ENCODE measurements at regions of chr13 and their contacts with region 1.

Region 1: DNA sequence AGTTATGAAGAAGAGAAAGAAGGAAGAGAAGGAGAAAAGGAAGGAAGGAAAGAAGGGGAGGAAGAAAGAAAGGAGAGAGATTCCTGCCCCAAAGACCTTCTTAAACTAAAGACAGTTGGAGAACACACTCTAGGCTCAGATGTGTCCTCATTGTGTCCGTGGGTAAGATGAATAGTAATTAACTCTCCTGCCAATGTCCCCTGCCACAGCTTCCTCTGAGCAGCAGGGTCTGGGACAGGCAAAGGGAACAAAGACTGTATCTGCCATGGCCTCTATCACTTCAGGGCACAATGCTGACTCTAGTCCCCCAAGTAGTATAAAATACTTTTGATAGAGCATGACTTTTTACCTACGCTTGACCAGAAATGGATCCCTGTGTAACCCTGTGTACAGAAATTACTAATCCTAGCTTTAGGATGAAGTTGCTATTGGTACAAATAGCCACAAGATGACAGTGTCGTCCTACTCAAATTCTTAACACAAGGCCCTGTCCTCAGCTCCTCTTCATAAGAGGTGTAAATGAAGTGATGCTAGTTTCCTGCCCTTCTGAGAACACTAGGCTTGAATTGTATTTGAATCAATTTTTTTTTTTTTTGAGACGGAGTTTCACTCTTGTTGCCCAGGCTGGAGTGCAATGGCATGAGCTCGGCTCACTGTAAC is 186.2 kb upstream of the GPR12 start:
- DNase-seq: no peak
- ATAC-seq: peak; percentile 20

Region 2: DNA sequence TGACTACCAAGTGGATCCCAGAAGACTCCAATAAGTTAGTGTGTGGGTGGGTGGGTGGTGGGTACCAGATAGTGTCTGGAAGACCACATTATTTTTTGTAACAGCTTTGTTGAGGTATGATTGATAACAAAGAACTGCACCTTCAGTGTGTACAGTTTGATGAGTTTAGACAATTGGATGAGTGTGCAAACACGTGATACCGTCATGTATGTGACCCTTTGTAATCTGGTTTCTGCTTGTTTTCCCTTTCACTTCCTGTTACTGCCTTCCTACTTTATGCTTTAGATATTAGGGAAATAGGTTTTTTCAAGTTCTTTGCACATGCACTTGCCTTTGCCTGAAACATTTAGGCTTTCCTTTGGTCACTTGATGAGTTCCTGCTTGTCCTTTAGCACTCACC is 313.0 kb after region 1 on chr13:
- intact Hi-C with region 1: no loop called
- DNase-seq: no peak
- ATAC-seq: peak; percentile 47

Region 3: DNA sequence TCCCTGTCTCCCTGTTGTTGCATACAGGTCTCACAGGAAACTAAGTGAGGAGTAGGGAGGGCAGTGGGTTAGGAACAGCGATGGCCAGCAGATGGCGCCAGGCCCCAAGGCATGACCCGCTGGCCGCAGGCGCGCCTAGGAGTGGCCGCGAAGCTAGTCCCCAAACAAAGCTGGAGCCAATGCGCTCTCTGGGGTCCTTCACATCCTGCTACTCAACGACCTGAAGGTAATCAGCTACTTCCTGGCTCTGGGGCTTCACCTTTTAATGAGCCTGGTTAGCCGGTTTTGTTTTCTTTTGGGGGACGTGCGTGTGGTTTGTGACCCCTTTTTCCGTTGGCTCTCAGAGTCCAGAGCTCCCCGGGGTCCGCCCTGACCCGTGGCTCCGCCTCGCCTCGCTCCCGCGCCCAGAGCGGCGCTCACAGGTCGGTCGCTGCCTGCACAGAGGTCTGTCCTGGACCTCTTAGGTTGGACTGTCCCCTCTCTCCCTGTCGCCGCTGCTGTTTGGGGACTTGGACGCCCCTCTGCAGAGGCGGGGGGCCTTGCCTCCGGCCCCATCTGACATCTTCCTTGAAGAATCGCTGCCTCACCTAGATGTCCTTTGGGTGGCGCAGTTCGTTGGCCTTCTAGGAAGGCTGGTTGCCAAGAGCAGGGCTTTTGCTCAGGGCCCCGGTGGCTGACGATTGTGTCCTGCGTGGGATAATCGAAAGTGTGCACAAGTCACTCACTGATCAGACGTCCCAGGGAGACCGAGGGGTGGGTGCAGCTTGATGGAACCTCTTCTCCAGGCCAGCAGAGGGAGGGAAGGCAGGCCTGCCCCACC is 415.5 kb after region 1 on chr13:
- intact Hi-C with region 1: loop called in 1 of 2 experiments (anchors 5 kb)
- DNase-seq: peak; percentile 82 to 93
- ATAC-seq: peak; percentile 95

Measured in left colon (tissue), 2 donors.